HepG2 (cell line): ENCODE measurements at regions of chr3 and their contacts with region 1.

Region 1: DNA sequence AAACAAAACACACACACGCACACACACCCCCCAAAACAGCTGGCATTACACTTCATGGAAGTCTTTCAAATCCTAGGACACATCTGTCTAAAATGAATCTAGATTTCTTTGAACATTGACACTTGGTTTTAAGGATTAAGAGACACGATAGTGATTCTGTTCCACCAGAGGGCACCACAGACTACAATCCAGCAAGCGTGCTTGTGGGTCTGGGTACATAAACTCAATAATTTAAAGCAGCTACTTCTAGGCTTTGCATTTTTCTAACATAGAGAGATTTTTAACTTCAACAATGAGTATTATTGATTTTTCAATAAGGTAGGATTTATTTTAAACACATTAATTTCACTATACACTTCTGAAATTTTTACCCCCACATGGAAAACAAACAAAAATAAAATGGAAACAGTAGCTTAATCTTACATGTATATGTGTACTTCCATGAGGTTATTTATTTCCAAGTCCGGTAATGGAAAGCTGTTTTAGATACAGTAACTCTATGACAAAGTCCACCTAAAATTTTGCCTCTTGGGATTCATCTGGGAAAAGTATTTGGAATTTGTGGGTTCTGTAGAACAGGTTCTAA is 564.0 kb upstream of the TGFBR2 start:
- DNase-seq: peak; percentile 66
- ATAC-seq: peak; percentile 82
- H3K4me3 ChIP-seq: no peak overlapping the region
- H3K27ac ChIP-seq: no peak overlapping the region
- H3K4me1 ChIP-seq: no peaks in the 10 kb centered on the region; the same call in 1 of the 2 replicates
- H3K27me3 ChIP-seq: no peaks in the 10 kb centered on the region
- CTCF ChIP-seq: peak; percentile 88
- EP300 ChIP-seq: no peak
- POLR2A ChIP-seq: no peak
- RAD21 ChIP-seq: peak; percentile 78

Region 2: GRCh38 chr3:30199096-30199759 is 156.9 kb after region 1 on chr3:
- CTCF ChIA-PET with region 1: interaction called, 15 read pairs
- POLR2A ChIA-PET with region 1: no interaction called
- in situ Hi-C with region 1: loop called (anchors 10 kb)
- intact Hi-C with region 1: loop called (anchors 1 kb)
- DNase-seq: peak; percentile 49
- ATAC-seq: peak; percentile 61
- H3K4me3 ChIP-seq: no peak overlapping the region
- H3K27ac ChIP-seq: no peak overlapping the region
- H3K4me1 ChIP-seq: peaks cover 21% of the 10 kb centered on the region
- H3K27me3 ChIP-seq: no peaks in the 10 kb centered on the region; a peak in 1 of 5 replicates
- CTCF ChIP-seq: peak; percentile 72
- EP300 ChIP-seq: no peak
- POLR2A ChIP-seq: no peak
- RAD21 ChIP-seq: peak; percentile 62

Region 3: DNA sequence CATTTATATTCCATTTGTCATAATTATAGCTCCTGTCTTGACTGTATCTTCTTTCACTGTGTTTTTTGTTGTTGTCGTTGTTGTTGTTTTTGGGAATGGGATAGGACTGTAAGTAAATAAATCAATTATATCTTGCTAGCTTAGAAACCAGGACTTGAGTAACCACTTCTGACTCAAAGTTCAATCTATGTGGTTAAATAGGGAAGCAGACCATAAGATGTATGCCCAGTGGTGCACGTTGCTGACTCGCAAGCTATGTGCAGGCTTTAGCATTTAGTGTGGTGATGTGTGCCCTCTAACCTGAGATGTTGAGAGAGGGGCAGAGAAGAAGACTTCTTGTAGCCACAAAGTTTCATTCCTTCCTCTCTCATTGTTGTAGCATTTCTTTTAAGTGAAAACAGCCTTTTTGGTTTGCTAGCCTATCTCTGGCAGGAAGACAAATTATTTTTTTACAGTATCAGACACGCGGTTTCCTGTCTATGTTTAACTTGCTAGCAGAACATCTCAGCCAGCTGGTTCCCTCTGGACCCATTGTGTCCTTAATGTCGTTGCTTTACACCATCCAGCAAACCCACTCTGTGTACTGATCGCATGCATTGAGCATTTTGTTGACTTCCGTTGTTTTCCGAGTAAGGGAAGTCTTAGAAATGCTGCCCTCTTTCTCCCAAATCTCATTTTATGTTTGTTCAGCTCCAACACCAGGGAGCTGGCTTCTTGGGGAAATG is 616.1 kb after region 1 on chr3:
- CTCF ChIA-PET with region 1: no interaction called
- POLR2A ChIA-PET with region 1: no interaction called
- in situ Hi-C with region 1: no loop called
- intact Hi-C with region 1: loop called (anchors 5 kb)
- DNase-seq: peak; percentile 32
- ATAC-seq: peak; percentile 17; the same call in 2 of the 3 replicates
- H3K4me3 ChIP-seq: no peak overlapping the region
- H3K27ac ChIP-seq: peak overlapping the region; percentile 34
- H3K4me1 ChIP-seq: peaks cover 74% of the 10 kb centered on the region
- H3K27me3 ChIP-seq: no peaks in the 10 kb centered on the region
- CTCF ChIP-seq: no peak
- EP300 ChIP-seq: no peak
- POLR2A ChIP-seq: no peak
- RAD21 ChIP-seq: no peak

Region 4: DNA sequence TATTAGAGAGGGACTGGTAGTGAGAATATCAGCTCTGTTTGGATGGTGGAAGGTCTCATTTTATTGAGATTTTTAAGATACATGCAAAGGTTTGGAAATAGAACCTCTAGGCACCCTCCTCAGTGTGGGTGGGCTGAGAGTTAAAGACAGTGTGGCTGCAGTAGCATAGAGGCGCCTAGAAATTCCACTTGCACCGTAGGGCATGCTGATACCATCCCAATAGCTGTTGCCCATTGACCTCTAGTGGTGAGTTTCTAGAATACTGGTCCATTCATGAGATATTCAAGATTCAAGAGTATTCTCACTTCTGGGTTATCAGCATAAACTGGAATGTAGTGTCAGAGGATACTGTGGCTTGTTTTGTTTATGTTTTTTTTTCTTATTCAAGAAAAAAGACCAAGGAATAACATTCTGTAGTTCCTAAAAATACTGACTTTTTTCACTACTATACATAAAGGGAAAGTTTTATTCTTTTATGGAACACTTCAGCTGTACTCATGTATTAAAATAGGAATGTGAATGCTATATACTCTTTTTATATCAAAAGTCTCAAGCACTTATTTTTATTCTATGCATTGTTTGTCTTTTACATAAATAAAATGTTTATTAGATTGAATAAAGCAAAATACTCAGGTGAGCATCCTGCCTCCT is 651.2 kb after region 1 on chr3:
- CTCF ChIA-PET with region 1: interaction called, 8 read pairs
- POLR2A ChIA-PET with region 1: no interaction called
- in situ Hi-C with region 1: no loop called
- intact Hi-C with region 1: loop called (anchors 1 kb)
- DNase-seq: peak; percentile 62
- ATAC-seq: peak; percentile 69
- H3K4me3 ChIP-seq: no peak overlapping the region
- H3K27ac ChIP-seq: peak overlapping the region; percentile 15
- H3K4me1 ChIP-seq: peaks cover 48% of the 10 kb centered on the region
- H3K27me3 ChIP-seq: no peaks in the 10 kb centered on the region
- CTCF ChIP-seq: peak; percentile 73
- EP300 ChIP-seq: no peak
- POLR2A ChIP-seq: no peak; a peak in 1 of 4 replicates
- RAD21 ChIP-seq: peak; percentile 73